Gastrocnemius medialis (tissue), 4 donors: ENCODE measurements at regions of chr7 and their contacts with region 1.

Region 1: GRCh38 chr7:99244939-99245338 is 27.7 kb upstream of the MYH16 start:
- DNase-seq: no peak
- ATAC-seq: no peak
- H3K4me3 ChIP-seq: no peak overlapping the region
- H3K27ac ChIP-seq: no peak overlapping the region
- H3K4me1 ChIP-seq: no peaks in the 10 kb centered on the region
- H3K27me3 ChIP-seq: peaks cover 0 to 2% (median 0%) of the 10 kb centered on the region in 3 donors
- CTCF ChIP-seq: no peak
- POLR2A ChIP-seq: no peak

Region 2: DNA sequence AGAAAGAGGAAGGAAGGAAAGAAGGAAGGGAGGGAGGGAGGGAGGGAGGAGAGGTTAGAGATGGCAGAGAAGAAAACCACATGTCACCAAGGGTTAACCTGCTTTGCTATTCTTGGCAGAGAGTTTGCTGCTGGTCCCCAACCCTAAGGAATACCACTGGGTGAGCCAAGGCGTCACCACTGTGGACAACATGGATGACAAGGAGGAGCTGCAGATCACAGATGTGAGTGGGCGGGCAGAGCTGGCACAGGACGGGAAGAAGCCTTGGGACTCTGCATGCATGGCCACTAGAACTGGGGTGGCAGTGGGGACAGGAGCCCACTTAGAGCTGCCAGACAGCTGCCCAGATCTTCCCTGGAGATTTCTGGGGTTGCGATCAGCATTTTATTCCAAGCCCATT is 10.5 kb after region 1 on chr7:
- in situ Hi-C with region 1: no loop called
- intact Hi-C with region 1: loop called (anchors 1 kb)
- DNase-seq: no peak
- ATAC-seq: no peak
- H3K4me3 ChIP-seq: no peak overlapping the region
- H3K27ac ChIP-seq: no peak overlapping the region
- H3K4me1 ChIP-seq: no peaks in the 10 kb centered on the region
- H3K27me3 ChIP-seq: no peaks in the 10 kb centered on the region
- CTCF ChIP-seq: no peak
- POLR2A ChIP-seq: no peak